ENCODE measurements at regions of chr17 and their contacts with region 1.

Region 1: DNA sequence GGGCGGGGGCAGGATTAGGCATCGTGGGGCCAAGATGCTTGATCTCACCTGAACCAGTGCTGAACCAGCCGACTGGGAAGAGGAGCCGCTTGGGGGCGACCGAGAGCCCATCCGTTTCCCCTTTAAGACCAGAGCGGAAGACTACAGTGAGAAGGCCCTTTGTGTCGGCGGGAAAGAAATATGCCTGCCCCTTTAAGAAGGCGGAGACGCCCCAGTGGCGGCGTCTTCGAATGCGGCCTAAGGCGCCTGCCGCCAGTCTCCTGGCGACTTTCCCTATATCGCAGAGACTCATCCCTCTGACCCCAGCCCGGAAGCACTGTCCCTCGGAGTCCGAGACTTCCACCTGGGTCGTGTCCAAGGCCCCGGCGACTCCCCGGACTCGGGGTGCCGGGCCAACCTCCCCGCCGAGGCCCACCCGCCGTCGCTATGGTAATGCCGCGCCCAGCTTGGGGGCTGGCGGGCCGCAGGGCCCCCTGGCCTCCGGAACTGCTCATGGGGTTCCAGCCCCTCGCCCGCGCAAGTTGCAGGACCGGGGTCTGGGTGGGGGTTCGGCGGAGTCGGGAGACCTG is at the start of gene HROB:
- DNase-seq: peak; percentile 98
- H3K4me3 Mint-ChIP-seq: peak within 1 kb of the TSS; percentile 78
- H3K27ac Mint-ChIP-seq: peak within 1 kb of the TSS; percentile 93
- H3K4me1 Mint-ChIP-seq: peaks cover 26% of the 10 kb centered on the region
- H3K27me3 Mint-ChIP-seq: no peaks in the 10 kb centered on the region
- CTCF ChIP-seq: peak; percentile 84
- total RNA-seq, gene HROB: 5.4 and 6.7 TPM in 2 replicates

Region 2: DNA sequence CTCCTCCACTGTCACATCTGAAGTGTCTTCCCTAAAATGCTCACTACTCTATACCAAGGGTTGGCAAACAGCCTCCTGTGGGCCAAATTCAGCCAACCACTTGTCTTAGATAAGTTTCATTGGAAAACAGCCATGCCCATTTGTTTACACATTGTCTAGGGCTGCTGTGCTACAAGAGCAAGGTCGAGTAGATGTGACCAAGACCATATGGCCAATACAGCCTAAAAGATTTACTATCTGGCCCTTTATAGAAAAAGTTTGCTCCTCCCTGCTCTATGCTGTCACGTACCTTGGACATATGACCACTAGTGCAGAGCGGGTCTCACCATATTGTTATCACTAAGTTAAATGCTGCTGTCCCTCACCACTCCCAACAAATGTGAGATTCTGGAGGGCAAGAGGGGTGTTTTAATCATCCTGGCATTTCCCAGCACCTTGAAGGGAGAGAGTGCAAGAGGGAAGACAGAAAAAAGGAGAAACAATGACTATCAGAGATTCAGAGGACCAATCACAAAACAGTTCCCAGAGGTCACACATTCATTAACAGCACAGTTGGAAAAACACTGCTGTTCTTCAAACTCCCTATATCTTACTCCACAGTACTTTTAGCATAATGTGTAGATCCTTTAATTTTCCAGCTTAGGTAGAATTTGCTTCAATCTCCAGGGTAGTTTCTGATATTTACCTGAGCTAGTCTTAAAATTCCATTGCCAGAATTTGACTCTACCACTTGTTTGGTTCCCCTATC is 88.5 kb before region 1 on chr17:
- CTCF ChIA-PET with region 1: no interaction called
- POLR2A ChIA-PET with region 1: no interaction called
- intact Hi-C with region 1: no loop called
- DNase-seq: no peak
- H3K4me3 Mint-ChIP-seq: no peak overlapping the region
- H3K27ac Mint-ChIP-seq: peak overlapping the region; percentile 65
- H3K4me1 Mint-ChIP-seq: no peaks in the 10 kb centered on the region
- H3K27me3 Mint-ChIP-seq: no peaks in the 10 kb centered on the region
- CTCF ChIP-seq: no peak

Region 3: GRCh38 chr17:44170499-44171201 is 28.8 kb after region 1 on chr17 and contains the start of gene ASB16:
- CTCF ChIA-PET with region 1: interaction called, 15 read pairs
- POLR2A ChIA-PET with region 1: interaction called, 18 read pairs
- intact Hi-C with region 1: loop called (anchors 1 kb)
- DNase-seq: no peak
- H3K4me3 Mint-ChIP-seq: no peak within 1 kb of the TSS
- H3K27ac Mint-ChIP-seq: no peak within 1 kb of the TSS
- H3K4me1 Mint-ChIP-seq: peaks cover 11% of the 10 kb centered on the region
- H3K27me3 Mint-ChIP-seq: no peaks in the 10 kb centered on the region
- CTCF ChIP-seq: no peak
- total RNA-seq, gene ASB16: not detected in 2 replicates

Region 4: DNA sequence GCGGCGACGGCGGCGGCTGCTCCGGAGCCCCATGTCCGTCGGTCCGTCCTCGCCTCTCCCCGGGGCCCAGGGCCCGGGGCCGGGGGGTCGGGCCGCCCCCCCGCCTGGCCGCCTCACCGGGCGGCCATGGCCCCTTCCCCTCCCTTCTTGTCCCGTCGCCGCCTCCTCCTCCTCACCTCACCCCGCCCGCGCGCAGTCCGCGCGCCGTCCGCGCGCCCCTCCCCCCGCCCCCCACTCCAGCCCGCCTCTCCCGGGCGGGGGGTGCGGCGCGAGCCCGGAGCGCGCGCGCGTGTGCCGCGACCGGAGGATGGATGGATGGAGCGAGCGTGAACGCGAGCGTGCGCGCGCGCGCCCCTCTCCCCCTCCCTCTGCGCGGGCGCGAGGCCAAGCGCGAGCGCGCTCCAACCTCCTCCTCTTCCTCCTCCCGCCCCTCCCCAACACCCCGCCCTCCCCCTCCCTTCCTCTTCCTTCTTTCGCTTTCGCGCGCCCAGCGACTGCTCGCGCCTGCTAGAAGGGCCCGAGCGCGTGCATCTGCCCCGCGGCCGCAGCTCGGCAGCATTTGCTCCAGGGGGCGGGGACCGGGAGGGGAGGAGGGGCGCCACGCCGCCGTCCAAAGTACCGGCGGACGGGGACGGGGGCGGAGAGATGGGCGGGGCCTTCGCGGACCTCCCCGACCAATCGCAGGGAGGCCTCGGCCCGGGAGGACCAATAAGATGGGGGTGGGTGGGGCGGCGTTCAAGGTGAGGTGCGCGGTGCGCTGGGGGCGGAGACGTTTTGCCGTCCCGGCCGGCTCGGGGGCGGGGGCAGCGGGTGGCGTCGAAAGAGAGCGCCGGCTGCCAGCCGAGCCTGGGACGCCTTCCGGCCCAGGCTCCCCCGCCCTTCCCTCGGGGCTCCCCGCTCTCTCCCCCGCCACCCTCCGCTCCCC is 58.0 kb after region 1 on chr17 and contains the start of gene ATXN7L3:
- CTCF ChIA-PET with region 1: interaction called, 4 read pairs
- POLR2A ChIA-PET with region 1: interaction called, 15 read pairs
- intact Hi-C with region 1: no loop called
- DNase-seq: peak; percentile 97
- H3K4me3 Mint-ChIP-seq: peak within 1 kb of the TSS; percentile 89
- H3K27ac Mint-ChIP-seq: peak within 1 kb of the TSS; percentile 95
- H3K4me1 Mint-ChIP-seq: peaks cover 45% of the 10 kb centered on the region
- H3K27me3 Mint-ChIP-seq: no peaks in the 10 kb centered on the region
- CTCF ChIP-seq: no peak
- total RNA-seq, gene ATXN7L3: 65.7 and 74.8 TPM in 2 replicates

Region 5: GRCh38 chr17:44230140-44230539 is 88.3 kb after region 1 on chr17:
- CTCF ChIA-PET with region 1: no interaction called
- POLR2A ChIA-PET with region 1: no interaction called
- intact Hi-C with region 1: no loop called
- DNase-seq: no peak
- H3K4me3 Mint-ChIP-seq: no peak overlapping the region
- H3K27ac Mint-ChIP-seq: no peak overlapping the region
- H3K4me1 Mint-ChIP-seq: peaks cover 5% of the 10 kb centered on the region
- H3K27me3 Mint-ChIP-seq: no peaks in the 10 kb centered on the region
- CTCF ChIP-seq: no peak